Activated B cell treated with CpG ODN at 0.5 μM for 24 hours (primary cell): ENCODE measurements at regions of chr12 and their contacts with region 1.

Region 1: GRCh38 chr12:25025951-25026490 is 77.1 kb upstream of the BCAT1 start:
- DNase-seq: no peak
- ATAC-seq: no peak
- H3K4me3 Mint-ChIP-seq: no peak overlapping the region
- H3K27ac Mint-ChIP-seq: no peak overlapping the region
- H3K4me1 Mint-ChIP-seq: peaks cover 30% of the 10 kb centered on the region
- H3K27me3 Mint-ChIP-seq: no peaks in the 10 kb centered on the region
- CTCF ChIP-seq: no peak

Region 2: DNA sequence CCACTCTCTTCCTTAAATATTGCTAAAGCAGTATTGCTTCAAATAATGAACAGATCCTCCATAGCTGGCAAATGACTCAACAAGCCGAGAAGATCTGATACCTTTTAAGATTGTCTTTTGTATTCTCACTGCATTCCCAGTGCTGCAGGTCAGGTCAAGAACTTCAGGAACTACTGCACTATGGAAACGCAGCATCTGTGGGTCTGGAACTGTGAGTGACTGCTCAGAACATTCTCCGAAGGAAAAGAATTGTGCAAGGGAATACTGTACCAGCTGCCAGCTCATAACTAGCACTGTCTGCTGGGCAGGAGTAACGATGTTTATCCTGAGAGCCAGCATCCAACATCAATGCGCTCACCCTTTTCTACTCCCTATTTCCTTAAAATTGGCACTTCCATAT is 728.5 kb before region 1 on chr12:
- CTCF ChIA-PET with region 1: no interaction called
- POLR2A ChIA-PET with region 1: no interaction called
- intact Hi-C with region 1: no loop called
- DNase-seq: no peak
- ATAC-seq: no peak
- H3K4me3 Mint-ChIP-seq: no peak overlapping the region
- H3K27ac Mint-ChIP-seq: no peak overlapping the region
- H3K4me1 Mint-ChIP-seq: peaks cover 3% of the 10 kb centered on the region
- H3K27me3 Mint-ChIP-seq: no peaks in the 10 kb centered on the region
- CTCF ChIP-seq: no peak

Region 3: GRCh38 chr12:24931666-24932405 is 94.2 kb before region 1 on chr12:
- CTCF ChIA-PET with region 1: no interaction called
- POLR2A ChIA-PET with region 1: no interaction called
- intact Hi-C with region 1: no loop called
- DNase-seq: no peak
- ATAC-seq: peak; percentile 94
- H3K4me3 Mint-ChIP-seq: peak overlapping the region; percentile 40
- H3K27ac Mint-ChIP-seq: peak overlapping the region; percentile 72
- H3K4me1 Mint-ChIP-seq: peaks cover 26% of the 10 kb centered on the region
- H3K27me3 Mint-ChIP-seq: no peaks in the 10 kb centered on the region
- CTCF ChIP-seq: no peak

Region 4: DNA sequence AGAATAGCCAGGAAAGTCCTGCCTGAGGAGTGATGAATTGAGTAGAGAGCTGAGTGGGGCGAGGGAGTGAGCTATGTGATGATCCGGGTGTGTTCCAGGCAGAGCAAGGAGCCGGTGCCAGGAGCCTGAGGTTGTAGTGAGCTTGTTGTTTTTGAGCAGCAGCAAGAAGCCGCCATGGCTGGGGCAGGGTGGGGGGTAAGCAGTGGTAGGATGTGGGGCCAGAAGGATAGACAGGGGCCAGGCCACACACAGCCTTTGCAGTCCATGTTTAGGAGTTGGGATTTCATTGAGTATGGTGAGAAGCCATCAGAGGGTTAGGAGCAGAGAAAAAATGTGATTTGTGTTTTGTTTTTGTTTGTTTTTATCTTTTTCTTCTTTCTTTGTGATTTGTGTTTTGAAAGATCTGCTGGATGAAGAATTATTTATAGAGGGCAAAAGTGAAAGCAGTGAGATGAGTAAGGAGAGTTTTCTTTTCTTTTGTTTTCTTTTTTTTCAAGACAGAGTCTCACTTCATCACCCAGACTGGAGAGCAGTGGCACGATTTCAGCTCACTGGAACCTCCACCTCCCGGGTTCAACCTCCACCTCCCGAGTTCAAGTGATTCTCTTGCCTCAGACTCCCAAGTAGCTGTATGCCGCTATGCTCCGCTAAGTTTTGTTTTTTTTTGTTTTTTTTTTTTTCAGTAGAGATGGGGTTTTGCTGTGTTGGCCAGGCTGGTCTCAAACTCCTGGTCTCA is 15.2 kb after region 1 on chr12:
- CTCF ChIA-PET with region 1: interaction called, 3 read pairs
- POLR2A ChIA-PET with region 1: interaction called, 3 read pairs
- intact Hi-C with region 1: loop called (anchors 2 kb)
- DNase-seq: no peak
- ATAC-seq: peak; percentile 54
- H3K4me3 Mint-ChIP-seq: peak overlapping the region; percentile 17
- H3K27ac Mint-ChIP-seq: peak overlapping the region; percentile 51
- H3K4me1 Mint-ChIP-seq: peaks cover 36% of the 10 kb centered on the region
- H3K27me3 Mint-ChIP-seq: no peaks in the 10 kb centered on the region
- CTCF ChIP-seq: no peak